Activated CD4-positive, alpha-beta T cell treated with anti-CD3 and anti-CD28 coated beads, Interleukin-2, amount 10 ng/mL, durations not matched to agents 24 days and 14 days (primary cell): ENCODE measurements at regions of chr5 and their contacts with region 1.

Region 1: DNA sequence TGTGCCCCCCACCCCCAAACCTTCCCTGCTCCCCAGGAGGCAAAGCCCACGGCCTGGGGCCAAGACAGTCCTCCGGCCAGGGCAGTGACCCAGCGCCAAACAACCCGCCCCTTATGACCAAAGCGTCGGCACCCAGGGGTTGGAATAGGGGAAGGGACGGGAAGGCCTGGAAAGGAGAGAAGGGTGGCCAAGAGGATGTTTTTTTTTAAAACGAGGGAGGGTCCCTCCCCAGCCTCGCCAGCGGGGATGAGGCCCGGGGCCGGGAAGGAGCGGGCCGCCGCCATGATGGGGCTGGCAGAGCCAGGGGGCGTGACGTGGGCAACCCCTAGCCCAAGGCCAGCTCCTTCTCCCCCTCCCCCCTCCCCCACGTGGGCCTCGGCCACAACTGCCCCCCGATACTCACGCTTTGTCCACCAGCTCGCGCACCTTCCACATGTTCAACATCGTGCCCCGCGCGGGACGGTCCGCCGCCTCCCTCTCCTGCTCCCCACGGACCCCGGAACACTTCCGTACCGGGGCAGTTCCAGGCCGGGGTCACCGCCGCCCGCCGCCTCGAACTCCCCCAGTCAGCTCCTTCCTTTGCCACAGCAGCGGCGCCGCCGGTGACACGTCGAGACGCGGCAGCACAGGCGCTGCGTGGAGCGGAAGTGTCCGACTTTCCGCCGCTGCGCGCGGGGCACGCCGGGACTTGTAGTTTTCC is at the start of gene CLINT1:
- DNase-seq: peak; percentile 97
- H3K4me3 Mint-ChIP-seq: peak within 1 kb of the TSS; percentile 99
- H3K27ac Mint-ChIP-seq: peak within 1 kb of the TSS; percentile 100
- H3K4me1 Mint-ChIP-seq: peaks cover 55% of the 10 kb centered on the region
- H3K27me3 Mint-ChIP-seq: no peaks in the 10 kb centered on the region
- total RNA-seq, gene CLINT1: 91.9 and 92.1 TPM in 2 replicates

Region 2: GRCh38 chr5:157596487-157596886 is 262.2 kb before region 1 on chr5:
- intact Hi-C with region 1: loop called (anchors 5 kb)
- DNase-seq: peak; percentile 86
- H3K4me3 Mint-ChIP-seq: peak overlapping the region; percentile 42
- H3K27ac Mint-ChIP-seq: peak overlapping the region; percentile 79
- H3K4me1 Mint-ChIP-seq: peaks cover 88% of the 10 kb centered on the region
- H3K27me3 Mint-ChIP-seq: no peaks in the 10 kb centered on the region

Region 3: GRCh38 chr5:157820593-157821252 is 38.0 kb before region 1 on chr5:
- intact Hi-C with region 1: loop called (anchors 1 kb)
- DNase-seq: peak; percentile 71
- H3K4me3 Mint-ChIP-seq: no peak overlapping the region
- H3K27ac Mint-ChIP-seq: no peak overlapping the region
- H3K4me1 Mint-ChIP-seq: peaks cover 17% of the 10 kb centered on the region
- H3K27me3 Mint-ChIP-seq: no peaks in the 10 kb centered on the region

Region 4: DNA sequence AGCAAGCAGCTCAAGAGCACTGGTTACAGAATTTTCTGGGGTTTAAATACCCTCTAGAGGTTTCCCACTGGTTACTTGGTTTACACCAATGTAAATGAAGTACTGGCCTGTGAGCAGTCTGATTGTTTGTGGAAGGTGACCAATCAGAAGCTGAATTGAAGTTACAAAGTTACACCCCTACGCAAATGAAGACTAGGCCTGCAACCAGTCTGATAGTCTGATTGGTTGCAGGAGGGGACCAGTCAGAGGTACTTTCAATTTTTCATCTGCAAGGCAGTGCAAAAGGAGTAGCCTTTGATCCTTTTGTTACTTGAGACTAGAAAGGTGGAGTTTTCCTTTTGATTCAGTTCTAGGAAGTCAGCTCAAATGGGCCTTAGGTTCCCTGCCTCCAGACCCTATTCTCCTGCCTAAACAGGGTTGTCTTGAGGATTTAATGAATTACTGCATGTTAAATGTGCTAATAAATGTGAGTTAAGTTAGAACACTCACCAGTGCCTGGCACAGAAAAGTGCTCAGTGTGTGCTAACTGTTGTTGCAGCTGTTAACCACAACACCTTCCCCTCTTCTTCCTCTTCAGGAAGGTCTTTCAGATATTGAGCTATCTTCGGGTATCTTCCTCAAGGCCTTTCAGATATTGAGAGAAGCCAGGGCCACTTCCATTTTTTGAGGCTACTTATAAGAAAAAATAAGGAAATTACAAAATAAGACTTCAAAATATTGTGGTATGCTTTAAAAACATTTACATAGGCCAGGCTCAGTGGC is 32.3 kb after region 1 on chr5:
- intact Hi-C with region 1: loop called (anchors 2 kb)
- DNase-seq: peak; percentile 58
- H3K4me3 Mint-ChIP-seq: no peak overlapping the region
- H3K27ac Mint-ChIP-seq: no peak overlapping the region
- H3K4me1 Mint-ChIP-seq: peaks cover 14% of the 10 kb centered on the region
- H3K27me3 Mint-ChIP-seq: no peaks in the 10 kb centered on the region

Region 5: DNA sequence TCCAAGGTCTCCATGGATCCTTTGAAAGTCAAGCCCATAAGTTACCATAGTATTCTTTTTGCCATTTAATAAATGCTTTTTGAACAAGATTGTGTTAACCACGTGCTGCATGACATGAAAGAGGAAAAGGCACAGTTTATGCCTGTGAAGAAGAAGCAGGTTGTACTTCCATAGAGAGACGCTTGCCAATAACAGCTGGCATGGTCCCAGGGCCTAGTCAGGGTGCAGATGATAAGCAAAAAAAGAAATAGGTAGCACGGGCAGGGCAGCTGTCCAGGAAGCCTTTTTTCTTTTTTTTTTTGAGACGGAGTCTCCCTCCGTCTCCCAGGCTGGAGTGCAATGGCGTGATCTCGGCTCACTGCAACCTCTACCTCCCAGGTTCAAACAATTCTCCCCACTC is 72.0 kb after region 1 on chr5:
- intact Hi-C with region 1: no loop called
- DNase-seq: no peak
- H3K4me3 Mint-ChIP-seq: no peak overlapping the region
- H3K27ac Mint-ChIP-seq: no peak overlapping the region
- H3K4me1 Mint-ChIP-seq: no peaks in the 10 kb centered on the region
- H3K27me3 Mint-ChIP-seq: no peaks in the 10 kb centered on the region

Region 6: GRCh38 chr5:157948738-157949410 is 90.2 kb after region 1 on chr5:
- intact Hi-C with region 1: loop called (anchors 1 kb)
- DNase-seq: peak; percentile 94
- H3K4me3 Mint-ChIP-seq: no peak overlapping the region
- H3K27ac Mint-ChIP-seq: no peak overlapping the region
- H3K4me1 Mint-ChIP-seq: peaks cover 3% of the 10 kb centered on the region
- H3K27me3 Mint-ChIP-seq: peaks cover 12% of the 10 kb centered on the region

Region 7: DNA sequence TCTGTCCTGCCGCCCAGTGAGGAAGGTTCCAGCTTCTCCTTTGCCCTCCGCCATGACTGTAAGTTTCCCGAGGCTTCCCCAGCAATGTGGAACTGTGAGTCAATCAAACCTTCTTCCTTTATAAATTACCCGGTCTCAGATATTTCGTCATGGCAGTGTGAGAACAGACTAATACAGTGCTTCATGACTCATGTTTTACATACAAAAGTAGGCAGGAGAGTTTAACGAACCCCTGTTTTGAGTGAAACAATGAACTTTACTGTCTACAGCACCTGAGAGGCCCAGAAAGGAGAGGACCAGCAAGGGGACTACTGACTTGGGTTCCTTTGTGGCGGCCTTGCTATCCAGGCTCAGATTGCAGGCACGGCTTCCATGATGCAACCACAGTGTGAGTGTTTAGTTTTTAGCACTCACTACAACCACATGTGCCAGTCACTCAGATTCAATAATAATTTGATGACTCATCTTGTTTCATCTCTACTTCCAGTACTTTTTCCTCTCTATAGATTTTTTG is 139.4 kb after region 1 on chr5:
- intact Hi-C with region 1: no loop called
- DNase-seq: no peak
- H3K4me3 Mint-ChIP-seq: no peak overlapping the region
- H3K27ac Mint-ChIP-seq: no peak overlapping the region
- H3K4me1 Mint-ChIP-seq: peaks cover 15% of the 10 kb centered on the region
- H3K27me3 Mint-ChIP-seq: peaks cover 36% of the 10 kb centered on the region